BJ (cell line): ENCODE measurements at regions of chr7 and their contacts with region 1.

Region 1: GRCh38 chr7:29091715-29092114 is 54.6 kb downstream of the CPVL start:
- DNase-seq: no peak
- H3K4me3 ChIP-seq: peak overlapping the region; percentile 19
- H3K27me3 ChIP-seq: no peaks in the 10 kb centered on the region; the same call in 1 of the 2 replicates
- CTCF ChIP-seq: no peak

Region 2: GRCh38 chr7:29105752-29106668 is 14.3 kb after region 1 on chr7:
- CTCF ChIA-PET with region 1: interaction called, 19 read pairs
- POLR2A ChIA-PET with region 1: no interaction called
- DNase-seq: no peak
- H3K4me3 ChIP-seq: no peak overlapping the region
- H3K27me3 ChIP-seq: peaks cover 2% of the 10 kb centered on the region
- CTCF ChIP-seq: peak; percentile 85